Cardiac septum (tissue), 1 donor: ENCODE measurements at regions of chr4 and their contacts with region 1.

Region 1: DNA sequence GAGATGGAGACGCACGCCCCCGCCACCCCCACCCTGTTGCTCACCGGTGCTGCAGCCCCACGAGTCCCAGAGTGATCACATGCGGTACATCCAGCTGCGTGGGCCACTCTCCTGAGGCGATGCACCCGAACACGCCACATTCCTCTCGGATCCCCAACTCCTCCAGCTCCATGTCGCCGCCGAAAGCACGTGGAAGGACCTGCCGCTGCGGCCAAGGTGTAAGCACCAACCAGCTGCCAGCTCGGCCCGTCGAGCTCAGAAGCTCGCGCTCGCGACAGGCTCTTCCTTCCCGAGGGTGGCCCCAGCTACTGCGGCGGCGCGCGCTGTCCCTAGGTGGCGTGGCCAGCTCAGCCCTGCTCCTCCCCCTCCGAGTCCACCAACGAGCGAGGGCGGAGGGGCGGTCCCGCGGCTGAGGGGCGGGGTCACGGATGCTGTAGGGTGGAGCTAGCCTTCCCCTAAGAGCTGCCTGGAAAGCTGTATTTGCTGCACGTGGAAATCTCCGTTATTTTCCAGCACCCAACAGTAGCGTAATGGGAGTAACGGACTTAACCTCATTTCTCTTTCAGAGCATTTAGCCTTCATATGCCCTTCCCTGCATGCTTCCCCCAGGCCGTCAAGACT is at the start of gene PPAT:
- DNase-seq: peak; percentile 99
- total RNA-seq, gene PPAT: 2.3 TPM

Region 2: DNA sequence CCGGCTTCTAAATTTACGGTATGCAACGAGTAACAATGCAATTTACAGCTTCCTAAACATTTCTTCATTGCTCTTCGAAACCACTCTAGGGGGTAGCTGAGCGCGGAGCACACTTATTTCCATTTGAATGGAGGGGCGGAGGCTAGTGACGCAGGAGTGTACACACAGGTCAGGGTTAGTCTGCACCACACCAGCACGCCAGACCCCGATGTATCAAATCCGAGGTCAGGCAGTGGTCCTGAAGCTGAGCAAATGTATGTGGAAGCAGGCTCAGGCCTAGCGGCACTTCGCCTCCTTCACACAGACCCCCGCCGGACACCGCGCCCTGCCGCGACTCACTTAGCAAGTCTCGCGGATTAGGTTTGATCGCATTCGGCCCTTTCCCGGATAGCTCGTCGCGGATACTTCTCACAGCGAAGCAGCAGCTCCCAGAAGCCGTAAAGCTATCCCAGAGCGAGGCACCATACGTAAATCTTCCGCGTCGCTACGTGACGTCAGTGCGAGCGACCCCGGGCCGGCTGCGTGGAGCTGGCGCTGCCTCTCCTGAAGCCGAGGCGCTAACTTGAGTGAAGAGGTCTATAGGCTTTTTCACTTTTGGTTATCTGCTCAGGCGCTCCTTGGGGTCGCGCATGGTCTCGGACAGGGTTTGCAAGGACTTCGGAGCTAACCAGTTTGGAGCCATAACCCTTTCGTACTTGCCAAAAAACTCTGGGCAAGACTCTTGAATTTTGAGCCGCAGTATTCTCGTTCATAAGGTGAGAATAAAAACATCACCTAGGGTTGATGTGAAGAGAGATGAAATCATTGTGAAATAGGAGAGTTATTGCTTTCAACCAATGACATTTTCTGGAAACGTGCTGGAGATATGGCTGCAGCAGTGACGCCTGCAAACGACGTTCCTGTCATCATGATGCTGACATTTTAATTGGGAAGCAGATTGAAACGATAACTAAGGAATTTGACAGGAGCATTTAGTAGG is 48.1 kb before region 1 on chr4 and contains the start of gene AASDH:
- intact Hi-C with region 1: loop called (anchors 1 kb)
- DNase-seq: peak; percentile 96
- total RNA-seq, gene AASDH: 8.1 TPM

Region 3: DNA sequence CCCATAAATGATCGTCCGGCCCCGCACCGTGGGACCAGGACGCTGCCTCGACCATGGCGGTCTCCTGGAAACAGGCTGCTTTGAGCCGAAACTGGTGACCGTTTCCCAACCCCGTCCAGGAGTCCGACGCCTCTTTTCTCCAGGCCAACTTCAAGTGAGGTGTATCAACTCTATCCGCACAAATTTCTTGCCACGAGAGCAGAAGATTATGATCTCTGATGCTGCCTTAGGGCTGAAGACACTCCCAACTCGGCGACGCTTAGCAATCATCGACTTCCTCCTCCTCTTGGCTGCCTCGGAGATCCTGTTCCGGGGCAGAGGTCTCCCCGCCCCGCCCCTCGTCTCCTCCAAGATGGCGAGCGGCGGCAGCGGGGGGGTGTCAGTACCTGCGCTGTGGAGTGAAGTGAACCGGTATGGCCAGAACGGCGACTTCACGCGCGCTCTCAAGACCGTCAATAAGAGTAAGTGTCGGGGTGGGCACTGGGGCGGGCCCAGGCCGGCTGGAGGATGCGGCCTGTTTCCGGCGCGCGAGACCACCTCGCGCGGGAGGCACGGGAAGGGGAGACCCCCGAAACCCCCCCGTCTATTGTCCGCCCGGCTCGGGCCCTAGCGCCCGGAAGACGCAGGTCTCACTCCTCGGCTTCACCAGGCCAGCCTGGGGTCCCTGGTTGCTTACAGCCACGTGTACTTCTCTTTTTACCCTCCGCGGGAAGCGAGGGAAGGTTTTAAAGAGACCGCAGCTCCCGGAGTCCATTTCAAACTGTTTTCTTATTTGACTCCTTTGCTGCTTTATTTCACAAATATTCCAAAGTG is 32.1 kb after region 1 on chr4 and contains the start of gene SRP72:
- intact Hi-C with region 1: loop called (anchors 1 kb)
- DNase-seq: peak; percentile 96
- total RNA-seq, gene SRP72: 43.4 TPM

Region 4: DNA sequence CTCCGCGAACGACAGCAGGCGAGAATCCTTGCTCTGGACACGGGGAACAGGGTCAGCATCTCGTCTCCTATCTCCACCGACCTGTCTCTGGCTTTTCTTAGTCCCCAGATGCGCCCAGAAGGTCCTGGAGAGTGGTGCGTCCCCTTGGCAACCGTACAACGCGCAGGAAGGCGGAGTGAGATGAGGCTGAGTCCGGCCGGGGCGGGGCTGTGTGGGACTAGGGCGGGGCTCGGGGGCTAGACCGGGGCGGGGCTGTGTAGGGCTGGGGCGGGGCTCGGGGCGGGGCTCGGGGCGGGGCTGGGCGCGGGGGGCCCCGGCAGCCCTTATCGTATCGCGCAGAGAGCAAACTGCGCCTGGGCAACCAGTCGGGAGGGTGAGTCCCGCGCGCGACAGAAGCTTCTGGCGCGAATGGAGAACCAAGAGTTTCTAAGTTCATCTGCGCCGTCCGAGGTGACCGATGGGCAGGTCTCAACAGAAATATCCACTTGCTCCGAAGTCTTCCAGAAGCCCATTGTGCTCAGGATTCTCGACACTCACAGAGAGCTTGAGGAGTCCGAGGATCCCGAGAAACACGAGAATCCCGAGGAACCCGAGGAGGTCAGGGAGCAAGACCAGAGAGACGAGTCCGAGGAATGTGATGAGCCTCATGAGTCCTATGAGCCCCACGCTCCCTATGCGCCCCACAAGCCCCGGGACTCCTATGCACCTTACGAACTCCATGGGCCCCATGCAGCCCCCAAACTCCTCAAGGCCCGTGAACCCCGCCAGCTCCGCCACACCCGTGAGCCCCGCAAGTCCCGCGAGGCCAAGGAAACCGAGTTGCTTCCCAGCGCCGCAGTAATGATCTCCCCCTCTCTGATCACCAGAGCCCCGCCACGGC is 95.1 kb after region 1 on chr4:
- intact Hi-C with region 1: loop called (anchors 5 kb)
- DNase-seq: peak; percentile 92

Region 5: GRCh38 chr4:56799824-56800756 is 364.7 kb after region 1 on chr4:
- intact Hi-C with region 1: loop called (anchors 10 kb)
- DNase-seq: peak; percentile 86